ENCODE measurements at regions of chr1 and their contacts with region 1.

Region 1: GRCh38 chr1:47785561-47786271 is 211.5 kb downstream of the TRABD2B start:
- DNase-seq: no peak
- H3K4me3 ChIP-seq: no peak overlapping the region
- H3K4me3 Mint-ChIP-seq: no peak overlapping the region
- H3K27ac Mint-ChIP-seq: no peak overlapping the region
- H3K4me1 ChIP-seq: no peaks in the 10 kb centered on the region
- H3K4me1 Mint-ChIP-seq: peaks cover 7% of the 10 kb centered on the region
- H3K27me3 ChIP-seq: no peaks in the 10 kb centered on the region
- H3K27me3 Mint-ChIP-seq: peaks cover 6% of the 10 kb centered on the region
- CTCF ChIP-seq: peak in 1 of 2 experiments; percentile 42

Region 2: GRCh38 chr1:47931394-47931793 is 145.7 kb after region 1 on chr1:
- CTCF ChIA-PET with region 1: no interaction called
- POLR2A ChIA-PET with region 1: no interaction called
- intact Hi-C with region 1: loop called (anchors 1 kb)
- DNase-seq: peak in 1 of 2 experiments; percentile 11
- H3K4me3 ChIP-seq: no peak overlapping the region
- H3K4me3 Mint-ChIP-seq: no peak overlapping the region
- H3K27ac Mint-ChIP-seq: no peak overlapping the region
- H3K4me1 ChIP-seq: no peaks in the 10 kb centered on the region
- H3K4me1 Mint-ChIP-seq: peaks cover 5% of the 10 kb centered on the region
- H3K27me3 ChIP-seq: no peaks in the 10 kb centered on the region
- H3K27me3 Mint-ChIP-seq: peaks cover 4% of the 10 kb centered on the region
- CTCF ChIP-seq: peak; percentile 15 to 39

Measured in Caco-2 (cell line).